Posterior vena cava (tissue), 2 donors: ENCODE measurements at regions of chr21 and their contacts with region 1.

Region 1: DNA sequence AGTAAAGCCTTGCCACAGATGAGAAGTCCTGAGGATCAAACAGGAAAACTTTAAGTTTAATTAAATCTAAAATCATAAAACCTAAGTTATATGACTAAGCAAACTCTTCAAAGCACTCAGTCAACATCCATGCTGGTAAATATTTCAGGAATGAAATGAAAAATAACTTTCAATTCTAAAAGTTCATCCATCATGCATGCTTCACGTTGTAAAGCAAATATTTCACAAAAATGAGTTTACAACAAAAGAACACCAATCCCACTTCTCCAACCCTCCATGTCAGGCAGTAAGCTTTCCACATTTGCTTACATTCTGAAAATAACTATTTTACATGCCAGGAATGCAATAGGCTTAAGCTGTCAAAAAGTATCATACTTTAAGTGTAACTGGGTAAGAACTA is 16.8 kb downstream of the APP start:
- DNase-seq: no peak

Region 2: DNA sequence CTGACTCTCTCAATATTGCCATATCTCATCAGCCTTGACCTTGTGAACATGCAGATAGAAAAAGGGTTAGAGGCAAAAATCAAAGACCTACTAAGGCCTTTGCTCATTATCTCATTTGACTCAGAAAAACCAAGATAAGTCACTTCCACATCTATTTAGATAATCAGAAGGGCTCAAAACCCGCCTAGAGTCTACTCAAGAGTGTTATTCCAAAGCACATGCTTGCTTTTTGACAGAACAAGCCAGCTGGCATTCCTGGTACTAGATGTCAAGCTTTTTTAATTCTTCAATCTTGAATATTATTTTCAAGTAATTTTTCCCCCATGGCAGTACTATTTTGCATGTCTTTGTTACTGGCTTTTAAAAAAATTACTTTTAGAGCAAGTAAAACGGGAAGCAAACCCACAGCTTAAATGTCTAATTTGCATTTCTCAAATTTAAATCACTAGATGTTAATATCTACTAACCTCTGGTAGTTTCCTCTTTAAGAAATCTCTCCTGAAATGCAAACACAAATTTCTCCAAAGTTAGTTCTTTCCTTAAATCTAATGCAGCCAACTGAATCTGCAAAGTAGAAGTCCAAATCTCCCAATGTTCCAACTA is 34.7 kb before region 1 on chr21:
- intact Hi-C with region 1: loop called in 1 of 2 experiments (anchors 1 kb)
- DNase-seq: no peak